Activated naive CD4-positive, alpha-beta T cell treated with anti-CD3 and anti-CD28 coated beads for 36 hours (primary cell): ENCODE measurements at regions of chr11 and their contacts with region 1.

Region 1: GRCh38 chr11:67409261-67409666 is 5.4 kb downstream of the TBC1D10C start:
- DNase-seq: peak; percentile 87
- H3K4me3 Mint-ChIP-seq: peak overlapping the region; percentile 83
- H3K27ac Mint-ChIP-seq: peak overlapping the region; percentile 96
- H3K4me1 Mint-ChIP-seq: peaks cover 79% of the 10 kb centered on the region
- H3K27me3 Mint-ChIP-seq: no peaks in the 10 kb centered on the region

Region 2: GRCh38 chr11:67420646-67421420 is 11.6 kb after region 1 on chr11:
- CTCF ChIA-PET with region 1: interaction called, 28 read pairs
- intact Hi-C with region 1: loop called (anchors 1 kb)
- DNase-seq: peak; percentile 97
- H3K4me3 Mint-ChIP-seq: peak overlapping the region; percentile 77
- H3K27ac Mint-ChIP-seq: peak overlapping the region; percentile 50
- H3K4me1 Mint-ChIP-seq: peaks cover 46% of the 10 kb centered on the region
- H3K27me3 Mint-ChIP-seq: no peaks in the 10 kb centered on the region

Region 3: DNA sequence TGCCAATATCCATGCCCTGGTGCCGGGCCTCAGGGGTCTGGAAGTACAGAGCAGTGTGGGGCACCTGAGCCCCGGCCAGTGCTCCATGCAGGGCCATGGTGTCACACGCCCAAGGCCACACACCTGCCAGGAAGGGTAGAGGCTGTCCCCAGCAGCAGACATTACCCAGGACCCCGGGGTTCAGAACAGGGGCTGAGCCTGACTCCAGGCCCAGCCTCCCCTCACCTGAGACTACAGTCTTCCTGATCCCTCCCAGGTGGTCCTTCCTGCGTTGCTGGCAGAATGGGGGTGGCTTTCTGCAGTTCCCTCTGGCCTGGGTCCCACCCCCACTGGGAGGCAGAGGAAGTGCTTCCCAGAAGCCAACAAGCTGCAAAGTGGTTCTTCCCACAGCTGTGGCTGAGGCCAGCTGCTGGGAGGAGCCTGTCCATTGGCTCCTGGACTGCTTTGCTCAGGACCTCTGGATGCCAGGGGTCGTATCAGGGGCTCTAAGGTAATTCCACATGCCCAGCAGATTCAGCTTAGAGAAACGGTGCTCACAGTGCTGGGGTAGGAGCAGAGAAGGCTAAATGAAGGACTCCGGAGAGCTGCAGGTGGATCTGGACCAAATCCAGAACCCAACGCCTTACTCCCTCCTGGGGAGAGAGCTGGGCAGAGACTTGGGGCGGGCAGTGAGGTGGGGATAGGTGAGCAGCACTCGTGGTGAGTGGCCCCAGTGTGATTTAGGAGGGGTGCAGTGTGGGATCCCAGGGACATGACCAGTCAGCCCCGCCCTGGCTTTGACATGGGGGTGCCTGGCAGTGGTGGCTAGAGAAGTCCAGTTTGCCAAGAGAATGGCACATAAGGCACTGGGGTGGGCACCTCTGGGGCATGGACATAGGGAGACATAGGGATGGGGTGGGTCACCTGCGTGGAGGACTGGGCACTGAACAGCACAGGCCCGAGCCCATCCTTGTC is 642.2 kb after region 1 on chr11:
- CTCF ChIA-PET with region 1: no interaction called
- intact Hi-C with region 1: no loop called
- DNase-seq: no peak
- H3K4me3 Mint-ChIP-seq: no peak overlapping the region
- H3K27ac Mint-ChIP-seq: no peak overlapping the region
- H3K4me1 Mint-ChIP-seq: no peaks in the 10 kb centered on the region
- H3K27me3 Mint-ChIP-seq: no peaks in the 10 kb centered on the region